Ovary (tissue), 10 donors: ENCODE measurements at regions of chr3 and their contacts with region 1.

Region 1: DNA sequence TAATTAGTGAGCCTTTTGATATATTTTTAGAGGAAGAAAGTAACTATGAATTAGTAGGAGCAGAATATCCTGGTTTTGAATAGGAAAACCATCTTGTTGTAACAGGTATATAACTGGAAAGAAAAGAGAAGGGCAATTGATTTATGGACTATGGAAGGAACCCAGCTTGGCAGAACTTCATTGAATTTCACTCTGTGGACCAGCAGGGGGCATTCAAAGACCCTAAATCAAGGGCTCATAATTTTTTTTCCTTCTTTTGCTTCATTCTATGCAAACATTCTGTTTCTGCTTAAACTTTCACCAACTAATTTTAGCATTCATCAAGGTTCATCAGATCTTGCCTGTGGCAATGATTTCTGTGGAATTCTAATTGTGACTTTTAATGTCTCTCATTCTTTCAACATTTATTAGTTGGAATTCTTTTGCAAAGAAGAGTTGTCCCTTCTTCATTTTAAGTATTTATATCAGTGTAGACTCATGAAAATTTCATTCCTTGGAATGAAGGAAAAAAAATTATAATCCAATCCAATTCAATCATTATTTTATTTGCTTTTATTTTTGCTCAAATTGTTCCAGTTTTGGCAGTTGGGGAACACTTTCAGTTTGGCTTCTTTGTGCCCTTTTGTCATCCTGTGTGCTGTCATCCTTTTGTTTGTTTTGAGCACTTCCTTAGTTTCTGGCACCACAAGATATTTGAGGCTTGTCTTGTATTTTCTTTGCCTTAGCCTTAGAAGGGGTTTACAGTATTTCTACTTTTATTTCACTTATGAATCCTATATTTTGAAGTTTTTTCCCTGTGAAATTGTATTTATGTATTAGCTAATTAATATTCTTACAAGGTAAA is 30.4 kb downstream of the NXPE3 start:
- DNase-seq: peak in 1 of 5 donors; percentile 40
- H3K4me3 ChIP-seq: no peak overlapping the region
- H3K27ac ChIP-seq: no peak overlapping the region
- H3K4me1 ChIP-seq: no peaks in the 10 kb centered on the region
- H3K27me3 ChIP-seq: no peaks in the 10 kb centered on the region
- CTCF ChIP-seq: peak in 2 of 3 donors; percentile 60 to 77
- EP300 ChIP-seq: no peak
- POLR2A ChIP-seq: no peak

Region 2: DNA sequence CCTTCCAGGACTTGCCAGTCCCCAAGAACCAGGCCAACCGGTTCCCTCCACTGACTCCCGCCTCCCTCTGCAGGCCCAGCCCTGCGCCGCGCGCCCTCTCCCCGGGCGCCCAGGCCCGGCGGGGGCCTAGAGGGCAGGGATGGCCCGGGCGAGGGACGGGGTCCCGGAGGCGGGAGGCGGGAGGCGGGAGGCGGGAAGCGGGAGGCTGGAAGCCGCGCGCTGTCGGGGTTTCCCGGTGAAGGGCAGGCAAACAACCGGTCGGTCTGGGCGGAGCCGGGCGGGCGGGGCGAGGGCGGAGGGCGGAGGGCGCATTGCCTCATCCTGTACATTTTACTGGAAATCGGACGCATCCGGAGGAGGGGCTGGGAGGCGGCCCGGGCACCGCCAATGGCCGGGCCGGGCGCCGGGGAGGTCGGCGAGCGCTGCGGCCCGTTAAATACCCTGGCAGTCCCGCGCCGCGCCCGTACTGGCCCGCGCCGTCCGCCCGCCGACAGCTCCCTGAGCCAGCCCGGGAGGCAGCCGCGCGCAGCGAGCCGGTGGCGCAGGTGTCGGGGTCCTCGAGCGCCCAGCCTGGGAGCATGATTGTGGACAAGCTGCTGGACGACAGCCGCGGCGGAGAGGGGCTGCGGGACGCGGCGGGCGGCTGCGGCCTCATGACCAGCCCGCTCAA is 39.8 kb after region 1 on chr3 and contains the start of gene NFKBIZ:
- intact Hi-C with region 1: loop called in 1 of 4 experiments (anchors 5 kb)
- DNase-seq: peak; percentile 95 to 97 (median 97)
- H3K4me3 ChIP-seq: peak within 1 kb of the TSS; percentile 76
- H3K27ac ChIP-seq: peak within 1 kb of the TSS; percentile 98 to 99
- H3K4me1 ChIP-seq: peaks cover 4% of the 10 kb centered on the region
- H3K27me3 ChIP-seq: no peaks in the 10 kb centered on the region
- CTCF ChIP-seq: no peak
- EP300 ChIP-seq: peak; percentile 87
- POLR2A ChIP-seq: peak; percentile 98
- total RNA-seq, gene NFKBIZ: 29.2 to 194 (median 45.5) TPM

Region 3: DNA sequence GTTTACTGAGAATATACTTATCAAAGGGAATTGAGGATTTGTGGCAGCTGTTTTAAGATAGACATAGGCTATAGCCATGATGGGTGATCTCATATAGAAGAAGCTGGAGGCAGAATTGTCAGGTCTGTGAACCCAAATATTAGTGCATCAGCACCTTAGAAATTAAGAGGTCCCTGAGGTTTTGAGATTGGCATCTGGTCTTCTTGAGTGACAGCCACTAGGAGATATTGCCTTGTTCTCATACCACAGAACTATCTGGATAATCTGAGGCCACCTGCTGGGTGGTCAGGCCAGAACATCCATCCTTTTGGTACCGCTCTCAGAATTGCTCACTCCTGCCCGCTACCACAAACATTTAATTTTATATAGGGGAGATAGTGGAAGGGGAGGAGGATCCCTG is 414.7 kb after region 1 on chr3:
- intact Hi-C with region 1: loop called (anchors 2 to 5 kb)
- DNase-seq: no peak
- H3K4me3 ChIP-seq: no peak overlapping the region
- H3K27ac ChIP-seq: no peak overlapping the region
- H3K4me1 ChIP-seq: no peaks in the 10 kb centered on the region
- H3K27me3 ChIP-seq: no peaks in the 10 kb centered on the region
- CTCF ChIP-seq: no peak
- EP300 ChIP-seq: no peak
- POLR2A ChIP-seq: no peak

Region 4: DNA sequence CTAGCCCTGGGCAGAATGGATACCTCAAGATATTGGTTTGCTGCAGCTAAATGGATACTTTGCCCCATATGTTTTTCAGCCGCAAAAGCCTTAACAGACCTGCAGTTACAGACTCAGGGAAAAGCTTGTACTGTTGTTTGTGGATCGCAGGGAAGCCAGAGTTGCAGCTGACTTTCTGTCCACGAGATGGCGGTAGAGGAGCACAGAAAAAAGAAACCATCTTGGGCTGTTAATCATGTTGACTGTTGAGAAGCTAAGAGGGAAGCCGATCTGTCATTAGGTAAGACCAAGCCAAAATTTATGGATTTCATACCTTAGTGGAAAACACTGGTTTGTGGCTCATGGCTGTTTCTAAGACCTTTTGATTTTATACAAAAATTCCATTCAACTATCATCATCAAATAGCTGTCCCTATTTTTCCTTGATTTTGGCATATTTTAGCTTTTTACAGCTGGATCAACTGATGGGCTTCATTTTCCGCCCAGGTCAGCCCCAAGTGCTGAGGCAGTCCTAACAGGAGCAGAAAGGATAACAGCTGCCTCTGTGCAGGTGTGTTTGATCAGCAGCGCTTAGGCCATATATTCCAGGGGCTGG is 419.8 kb after region 1 on chr3:
- intact Hi-C with region 1: loop called (anchors 2 to 5 kb)
- DNase-seq: peak; percentile 39 to 76 (median 71)
- H3K4me3 ChIP-seq: no peak overlapping the region
- H3K27ac ChIP-seq: no peak overlapping the region
- H3K4me1 ChIP-seq: no peaks in the 10 kb centered on the region
- H3K27me3 ChIP-seq: no peaks in the 10 kb centered on the region
- CTCF ChIP-seq: peak; percentile 61 to 84 (median 73)
- EP300 ChIP-seq: no peak
- POLR2A ChIP-seq: no peak

Region 5: GRCh38 chr3:103319912-103320311 is 1510.5 kb after region 1 on chr3:
- intact Hi-C with region 1: loop called in 1 of 4 experiments (anchors 10 kb)
- DNase-seq: no peak
- H3K4me3 ChIP-seq: no peak overlapping the region
- H3K27ac ChIP-seq: no peak overlapping the region
- H3K4me1 ChIP-seq: no peaks in the 10 kb centered on the region
- H3K27me3 ChIP-seq: no peaks in the 10 kb centered on the region
- CTCF ChIP-seq: no peak
- EP300 ChIP-seq: no peak
- POLR2A ChIP-seq: no peak